GM13977 (cell line): ENCODE measurements at regions of chr3 and their contacts with region 1.

Region 1: DNA sequence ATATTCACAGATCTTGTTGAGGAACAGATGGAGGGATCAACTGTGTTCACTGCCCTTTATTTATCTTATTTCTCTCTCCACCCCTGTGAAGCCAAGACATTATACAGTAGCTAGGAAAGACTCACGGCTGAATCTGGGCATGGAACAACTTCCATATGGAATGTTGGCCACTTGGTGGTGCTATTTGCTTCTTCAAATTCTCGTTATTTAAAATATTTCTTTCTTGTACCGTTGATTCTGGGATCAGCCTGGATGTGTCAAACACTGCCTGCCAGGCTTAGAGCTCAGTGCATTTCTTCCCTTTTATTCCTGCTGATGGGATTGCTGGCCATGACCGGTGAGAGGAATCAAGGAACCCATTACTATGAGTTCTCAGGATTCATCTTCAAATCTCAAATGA is 17.5 kb upstream of the GASK1A start:
- DNase-seq: peak; percentile 39
- CTCF ChIP-seq: peak; percentile 46

Region 2: DNA sequence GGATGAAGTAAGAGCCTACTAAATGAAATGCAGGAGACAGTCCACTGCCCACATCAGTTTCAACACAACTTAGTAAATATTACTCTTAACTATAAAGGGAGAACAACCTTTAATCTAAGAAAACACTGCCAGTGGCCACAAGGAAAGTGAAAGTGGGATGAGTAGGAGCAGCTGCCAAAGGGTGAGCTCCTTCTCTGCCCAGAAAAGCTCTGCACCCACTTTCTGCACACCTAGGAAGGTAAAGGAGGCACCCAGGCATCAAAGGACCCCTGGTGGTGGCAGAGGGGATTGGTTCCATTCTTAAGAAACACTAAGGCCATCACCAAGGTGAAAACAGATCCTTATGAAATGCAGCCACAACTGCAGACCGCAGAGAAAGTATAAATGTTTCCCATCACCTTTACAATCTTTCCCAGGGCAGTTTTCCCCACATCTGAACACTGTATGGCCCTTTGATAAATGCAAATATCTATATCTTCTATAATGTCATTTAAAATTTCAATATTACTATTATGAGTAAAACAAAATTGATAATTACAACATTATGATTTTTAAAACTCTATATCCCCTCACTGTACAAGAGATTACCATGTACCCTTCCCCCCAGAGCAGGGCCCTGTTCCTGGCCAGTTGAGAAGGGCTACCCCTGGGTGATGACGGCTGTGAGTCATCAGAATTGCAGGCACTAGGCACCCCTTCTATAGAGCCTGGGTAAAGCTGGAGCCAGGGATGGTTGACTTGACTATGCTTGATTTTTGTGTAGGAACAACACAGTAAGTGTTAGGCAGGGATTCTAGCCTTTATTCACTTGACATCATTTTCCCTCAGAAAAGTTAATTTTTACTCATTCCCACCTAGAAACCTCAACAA is 416.7 kb after region 1 on chr3:
- in situ Hi-C with region 1: loop called (anchors 25 kb)
- DNase-seq: peak; percentile 80
- CTCF ChIP-seq: peak; percentile 87

Region 3: DNA sequence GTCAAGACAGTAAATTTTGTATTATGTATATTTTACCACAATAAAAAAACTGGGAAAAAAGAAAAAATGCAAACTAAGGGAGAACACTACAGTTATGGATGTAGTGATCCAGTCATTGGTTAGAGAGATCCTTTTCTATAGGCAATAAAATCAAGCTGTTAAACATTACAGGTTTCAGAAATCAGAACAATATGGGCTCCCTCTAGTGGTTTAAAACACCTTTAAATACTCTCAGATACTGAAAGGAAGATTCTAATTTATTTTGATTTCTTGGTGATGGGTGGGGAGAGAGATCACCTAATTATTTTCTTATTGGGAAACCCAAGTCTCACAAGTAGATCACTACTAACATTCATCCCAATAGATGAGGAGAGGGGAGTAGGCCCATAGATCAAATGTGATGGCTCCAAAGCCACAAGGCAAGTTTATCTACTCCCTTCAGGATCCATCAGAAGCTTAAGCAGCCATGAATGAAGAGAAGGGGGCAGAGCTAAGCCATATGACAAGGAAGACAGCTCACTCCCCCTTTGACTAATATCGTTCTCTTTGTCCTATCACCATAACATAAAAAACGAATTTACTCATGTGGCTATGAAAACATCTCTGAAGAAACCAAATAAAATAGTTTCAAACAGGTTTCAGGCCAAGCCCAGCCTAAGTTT is 541.6 kb after region 1 on chr3:
- in situ Hi-C with region 1: loop called (anchors 25 kb)
- DNase-seq: peak; percentile 14
- CTCF ChIP-seq: peak; percentile 38